Activated CD4-positive, alpha-beta T cell treated with anti-CD3 and anti-CD28 coated beads for 36 hours (primary cell): ENCODE measurements at regions of chr2 and their contacts with region 1.

Region 1: DNA sequence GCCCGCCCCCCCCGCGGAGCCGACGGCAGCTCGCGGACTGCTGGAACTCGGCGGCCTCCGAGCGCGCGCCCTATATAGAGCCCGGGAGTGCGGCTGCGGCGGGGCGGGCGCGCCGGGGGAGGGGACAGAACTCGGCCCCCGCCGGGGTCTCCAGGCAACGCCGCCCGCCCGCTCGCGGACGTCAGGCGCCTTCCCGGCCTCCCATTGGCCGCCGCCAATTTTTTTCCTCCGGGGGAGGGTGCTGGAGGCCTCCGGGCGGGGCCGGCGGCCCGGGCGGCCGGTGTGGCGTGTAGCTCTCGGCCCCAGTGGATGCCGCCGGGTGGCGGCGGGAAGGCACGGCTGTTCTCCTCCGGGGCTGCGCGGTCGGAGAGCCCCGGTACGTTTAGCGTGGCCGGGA is at the start of gene ZFP36L2:
- DNase-seq: peak; percentile 98
- ATAC-seq: peak; percentile 75
- H3K4me3 Mint-ChIP-seq: peak within 1 kb of the TSS; percentile 83
- H3K27ac Mint-ChIP-seq: peak within 1 kb of the TSS; percentile 91
- H3K4me1 Mint-ChIP-seq: peaks cover 37% of the 10 kb centered on the region
- H3K27me3 Mint-ChIP-seq: no peaks in the 10 kb centered on the region
- total RNA-seq, gene ZFP36L2: 74.4 to 77.7 TPM

Region 2: DNA sequence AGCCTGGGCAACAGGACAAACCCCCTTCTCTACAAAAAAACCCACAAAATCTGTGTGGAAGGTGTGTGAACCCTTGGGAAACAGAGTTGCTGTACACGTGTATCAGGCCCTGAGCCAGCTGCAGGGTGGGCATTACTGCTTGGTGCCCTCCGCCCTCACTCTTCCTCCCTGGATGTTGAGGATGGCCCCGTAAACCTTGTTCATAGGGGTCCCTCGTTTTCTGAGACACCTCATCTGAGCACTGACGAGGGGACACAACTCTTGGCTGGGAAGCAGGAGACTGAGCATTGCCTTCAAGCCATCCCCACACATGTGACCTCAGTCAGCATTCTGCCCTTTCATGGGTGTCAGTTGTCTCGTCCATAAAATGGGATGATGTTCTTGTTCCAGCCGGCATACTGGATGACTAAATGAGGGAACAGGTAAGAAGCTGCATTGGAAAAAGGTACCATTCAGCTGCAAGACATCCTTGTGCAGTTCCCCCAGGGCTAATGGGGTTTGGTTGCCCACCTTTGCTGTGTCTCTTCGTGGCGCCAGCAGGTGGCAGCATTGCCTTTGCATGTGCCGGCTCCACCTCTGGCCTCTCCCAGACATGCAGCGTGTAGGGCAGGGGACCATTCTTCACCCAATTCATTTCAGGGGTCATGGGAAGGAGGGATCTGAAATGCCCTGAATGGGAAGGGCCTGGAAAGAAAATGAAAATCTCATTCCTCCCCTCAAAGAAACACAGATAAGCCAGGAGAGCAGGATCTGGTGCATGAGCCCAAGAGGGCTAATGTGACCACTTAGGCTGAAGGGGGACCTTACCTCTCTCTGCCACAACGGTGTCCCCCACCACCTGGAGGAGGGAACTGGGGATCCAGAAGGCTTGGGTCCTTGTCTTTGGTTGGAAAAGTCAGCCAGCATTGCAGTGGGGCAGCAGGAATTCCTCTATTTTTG is 397.8 kb before region 1 on chr2:
- CTCF ChIA-PET with region 1: interaction called, 7 read pairs
- POLR2A ChIA-PET with region 1: no interaction called
- intact Hi-C with region 1: loop called (anchors 1 to 2 kb)
- DNase-seq: peak; percentile 84
- ATAC-seq: peak; percentile 92
- H3K4me3 Mint-ChIP-seq: no peak overlapping the region
- H3K27ac Mint-ChIP-seq: no peak overlapping the region
- H3K4me1 Mint-ChIP-seq: peaks cover 10% of the 10 kb centered on the region
- H3K27me3 Mint-ChIP-seq: no peaks in the 10 kb centered on the region

Region 3: GRCh38 chr2:43024515-43025011 is 202.0 kb before region 1 on chr2:
- CTCF ChIA-PET with region 1: interaction called, 7 read pairs
- POLR2A ChIA-PET with region 1: no interaction called
- intact Hi-C with region 1: loop called (anchors 1 to 5 kb)
- DNase-seq: peak; percentile 72
- ATAC-seq: peak; percentile 64
- H3K4me3 Mint-ChIP-seq: no peak overlapping the region
- H3K27ac Mint-ChIP-seq: no peak overlapping the region
- H3K4me1 Mint-ChIP-seq: peaks cover 14% of the 10 kb centered on the region
- H3K27me3 Mint-ChIP-seq: no peaks in the 10 kb centered on the region

Region 4: DNA sequence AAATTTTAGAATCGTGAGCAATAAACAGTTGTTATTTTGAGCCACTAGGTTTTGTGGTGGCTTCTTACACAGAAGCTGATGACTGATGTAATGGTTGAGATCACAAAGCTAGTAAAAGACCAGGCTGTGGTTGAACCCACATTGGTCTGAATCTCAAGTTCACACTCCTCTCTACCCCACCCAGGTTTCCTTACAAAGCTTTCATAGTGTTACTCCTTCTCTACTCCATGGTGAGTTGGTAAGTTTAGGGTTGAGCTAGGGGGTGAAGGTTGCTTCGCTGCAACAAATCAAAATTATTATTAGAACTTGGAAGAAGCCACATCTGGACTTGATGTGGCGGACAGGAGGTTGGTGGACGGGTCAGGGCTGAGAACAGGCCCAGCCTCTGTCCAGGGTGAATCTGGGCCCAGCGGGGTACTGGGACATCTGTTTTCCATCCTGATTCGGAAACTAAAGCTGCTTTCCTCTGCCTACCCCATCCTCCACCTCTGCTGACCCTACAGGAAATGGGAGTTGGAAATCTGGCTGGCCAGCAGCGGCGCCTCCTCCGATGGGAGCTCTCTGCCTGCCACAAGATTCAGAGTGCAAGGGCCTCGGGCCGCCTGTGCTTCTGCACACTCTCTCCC is 86.4 kb before region 1 on chr2:
- CTCF ChIA-PET with region 1: interaction called, 239 read pairs
- POLR2A ChIA-PET with region 1: interaction called, 14 read pairs
- intact Hi-C with region 1: no loop called
- DNase-seq: peak; percentile 38
- ATAC-seq: peak; percentile 30
- H3K4me3 Mint-ChIP-seq: peak overlapping the region; percentile 5
- H3K27ac Mint-ChIP-seq: peak overlapping the region; percentile 62
- H3K4me1 Mint-ChIP-seq: peaks cover 72% of the 10 kb centered on the region
- H3K27me3 Mint-ChIP-seq: no peaks in the 10 kb centered on the region

Region 5: DNA sequence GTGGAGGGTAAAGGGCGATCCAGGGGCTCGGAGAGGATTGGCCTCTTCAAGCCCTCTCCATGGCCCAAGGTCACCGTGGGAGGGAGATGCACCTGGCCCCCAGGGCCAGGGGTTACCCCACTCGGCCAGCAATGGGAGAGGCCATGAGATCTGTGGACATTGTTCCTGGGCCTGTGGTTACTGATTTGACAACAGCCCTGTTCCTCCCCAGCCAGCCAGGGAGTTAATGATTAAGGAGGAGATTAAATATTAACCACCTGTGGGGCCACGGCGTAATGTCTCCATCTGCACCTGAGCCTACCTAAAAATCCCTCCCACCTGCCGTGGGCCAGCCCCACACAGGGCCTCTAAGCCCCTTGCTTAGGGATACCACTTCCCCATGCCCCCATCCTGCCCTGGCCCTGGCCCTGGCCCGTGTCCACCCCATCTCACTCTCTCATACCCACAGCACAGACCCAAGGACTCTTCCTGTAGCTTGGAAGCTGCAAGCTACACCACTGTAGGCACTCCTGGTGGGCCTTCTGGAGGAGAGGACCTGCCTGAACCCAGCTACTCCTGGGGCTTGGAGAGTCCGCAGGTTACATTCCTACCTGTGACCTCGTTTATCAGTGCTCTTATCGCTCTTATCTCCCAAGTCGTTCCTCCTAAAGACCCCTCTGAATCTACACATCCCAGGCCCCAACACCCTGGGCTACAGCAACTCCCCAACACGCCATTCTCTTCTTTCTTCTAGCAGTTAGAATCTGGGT is 32.3 kb before region 1 on chr2:
- CTCF ChIA-PET with region 1: interaction called, 26 read pairs
- POLR2A ChIA-PET with region 1: interaction called, 6 read pairs
- intact Hi-C with region 1: loop called in 1 of 2 experiments (anchors 1 kb)
- DNase-seq: no peak
- ATAC-seq: no peak
- H3K4me3 Mint-ChIP-seq: peak overlapping the region; percentile 75
- H3K27ac Mint-ChIP-seq: peak overlapping the region; percentile 95
- H3K4me1 Mint-ChIP-seq: peaks cover 57% of the 10 kb centered on the region
- H3K27me3 Mint-ChIP-seq: no peaks in the 10 kb centered on the region

Region 6: GRCh38 chr2:43537137-43537536 is 310.6 kb after region 1 on chr2:
- CTCF ChIA-PET with region 1: interaction called, 5 read pairs
- POLR2A ChIA-PET with region 1: interaction called, 3 read pairs
- intact Hi-C with region 1: loop called (anchors 1 to 5 kb)
- DNase-seq: no peak
- ATAC-seq: no peak
- H3K4me3 Mint-ChIP-seq: no peak overlapping the region
- H3K27ac Mint-ChIP-seq: peak overlapping the region; percentile 65
- H3K4me1 Mint-ChIP-seq: peaks cover 21% of the 10 kb centered on the region
- H3K27me3 Mint-ChIP-seq: no peaks in the 10 kb centered on the region

Region 7: GRCh38 chr2:43553341-43553855 is 326.8 kb after region 1 on chr2:
- CTCF ChIA-PET with region 1: no interaction called
- POLR2A ChIA-PET with region 1: no interaction called
- intact Hi-C with region 1: no loop called
- DNase-seq: no peak
- ATAC-seq: no peak
- H3K4me3 Mint-ChIP-seq: no peak overlapping the region
- H3K27ac Mint-ChIP-seq: no peak overlapping the region
- H3K4me1 Mint-ChIP-seq: peaks cover 4% of the 10 kb centered on the region
- H3K27me3 Mint-ChIP-seq: no peaks in the 10 kb centered on the region